OCI-LY7 (cell line): ENCODE measurements at regions of chr10 and their contacts with region 1.

Region 1: GRCh38 chr10:26408858-26409494 is 29.2 kb upstream of the APBB1IP start:
- DNase-seq: peak; percentile 53
- H3K4me3 ChIP-seq: no peak overlapping the region
- H3K27ac ChIP-seq: no peak overlapping the region
- H3K4me1 ChIP-seq: peaks cover 28% of the 10 kb centered on the region
- CTCF ChIP-seq: no peak

Region 2: DNA sequence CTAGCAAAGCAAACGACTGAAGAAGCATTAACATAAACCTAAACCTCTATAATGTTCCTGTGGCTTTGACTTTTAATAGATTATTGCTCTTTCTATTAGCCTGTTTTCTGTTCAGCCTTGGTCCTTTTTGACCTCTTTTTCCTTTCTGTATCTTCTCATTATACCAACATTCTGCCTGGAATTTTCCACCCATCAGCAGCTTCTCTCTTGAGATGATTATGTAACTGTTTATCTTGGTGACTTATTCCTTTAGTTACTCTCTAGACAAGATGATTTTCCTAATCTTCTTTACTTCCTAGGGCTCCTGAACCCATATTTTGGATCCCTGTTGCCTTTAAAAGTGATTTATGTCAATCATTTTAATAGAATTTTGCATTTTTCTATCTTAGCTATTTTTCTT is 393.9 kb before region 1 on chr10:
- CTCF ChIA-PET with region 1: no interaction called
- POLR2A ChIA-PET with region 1: no interaction called
- intact Hi-C with region 1: no loop called
- DNase-seq: no peak
- H3K4me3 ChIP-seq: no peak overlapping the region
- H3K27ac ChIP-seq: no peak overlapping the region
- H3K4me1 ChIP-seq: no peaks in the 10 kb centered on the region
- CTCF ChIP-seq: no peak

Region 3: DNA sequence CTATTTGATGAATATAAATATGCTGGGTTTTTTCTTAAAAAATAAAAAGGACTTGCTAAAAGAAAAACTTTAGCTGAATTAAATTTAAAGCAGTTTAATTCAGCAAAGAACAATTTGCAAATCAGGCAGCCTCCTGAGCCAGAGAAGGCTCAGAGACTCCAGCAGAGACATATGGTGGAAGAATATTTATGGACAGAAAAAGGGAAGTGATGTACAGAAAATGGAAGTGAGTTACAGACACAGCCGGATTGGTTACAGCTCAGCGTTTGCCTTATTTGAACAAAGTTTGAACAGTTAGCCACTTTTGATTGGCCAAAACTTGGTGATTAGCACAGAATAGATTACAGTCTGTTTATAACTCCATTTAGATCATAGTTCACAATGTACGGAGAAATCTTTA is 82.1 kb before region 1 on chr10:
- CTCF ChIA-PET with region 1: no interaction called
- POLR2A ChIA-PET with region 1: interaction called, 10 read pairs
- intact Hi-C with region 1: no loop called
- DNase-seq: no peak
- H3K4me3 ChIP-seq: no peak overlapping the region
- H3K27ac ChIP-seq: no peak overlapping the region
- H3K4me1 ChIP-seq: no peaks in the 10 kb centered on the region
- CTCF ChIP-seq: no peak

Region 4: GRCh38 chr10:26430641-26431164 is 21.7 kb after region 1 on chr10:
- CTCF ChIA-PET with region 1: no interaction called
- POLR2A ChIA-PET with region 1: interaction called, 15 read pairs
- intact Hi-C with region 1: no loop called
- DNase-seq: peak; percentile 68
- H3K4me3 ChIP-seq: no peak overlapping the region
- H3K27ac ChIP-seq: no peak overlapping the region
- H3K4me1 ChIP-seq: peaks cover 19% of the 10 kb centered on the region
- CTCF ChIP-seq: no peak